Activated T-helper 2 cell treated with anti-CD3 and anti-CD28 coated beads, Interferon-gamma antibody, Interleukin-2, Interleukin-4, amounts not matched to agents 10 μg/mL and 5 μg/mL and 100 μg/mL, durations not matched to agents 14 hours and 24 hours and 36 hours (primary cell): ENCODE measurements at regions of chr1 and their contacts with region 1.

Region 1: DNA sequence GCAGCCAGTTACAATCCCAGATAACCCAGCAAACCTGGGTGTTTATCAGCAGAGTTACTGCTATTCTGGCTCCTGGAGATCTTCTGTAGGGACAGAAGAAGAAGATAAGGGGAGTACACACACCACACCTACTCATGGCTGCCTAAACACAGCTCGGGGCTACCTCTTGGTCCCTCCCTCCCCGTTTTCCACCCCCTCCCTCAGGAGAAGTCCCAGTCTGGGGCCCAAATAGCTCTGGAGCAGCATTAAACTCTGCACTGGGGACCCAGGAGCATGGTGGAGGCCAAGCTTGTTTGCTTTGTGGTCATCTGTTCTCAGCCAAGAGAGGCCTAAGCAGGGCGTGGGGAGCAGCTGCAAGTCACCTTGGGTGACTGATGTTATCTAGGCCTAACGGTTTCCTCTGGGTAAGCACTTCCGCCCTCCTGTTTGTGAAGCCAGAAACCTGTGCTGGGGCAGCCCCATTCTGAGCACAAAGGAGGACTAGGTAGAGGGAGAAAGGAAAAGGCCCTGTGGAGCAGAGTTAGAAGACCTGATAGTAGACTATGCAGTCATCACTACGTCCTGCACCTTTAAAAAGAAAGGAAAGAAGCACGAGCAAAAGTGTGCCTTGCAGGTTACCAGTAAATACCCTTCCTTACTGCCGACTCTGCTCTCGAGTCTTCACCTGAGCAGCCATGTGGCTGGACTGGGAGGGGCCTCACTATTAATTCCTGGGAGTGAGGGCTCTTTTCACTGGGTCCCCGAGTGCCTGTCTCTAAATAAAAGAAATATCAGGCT is 2.0 kb upstream of the RCSD1 start:
- DNase-seq: peak; percentile 84
- H3K4me3 Mint-ChIP-seq: peak overlapping the region; percentile 96
- H3K27ac Mint-ChIP-seq: peak overlapping the region; percentile 95
- H3K4me1 Mint-ChIP-seq: peaks cover 55% of the 10 kb centered on the region
- H3K27me3 Mint-ChIP-seq: no peaks in the 10 kb centered on the region

Region 2: GRCh38 chr1:167454894-167455785 is 172.9 kb before region 1 on chr1:
- intact Hi-C with region 1: loop called (anchors 5 kb)
- DNase-seq: peak; percentile 77
- H3K4me3 Mint-ChIP-seq: peak overlapping the region; percentile 77
- H3K27ac Mint-ChIP-seq: peak overlapping the region; percentile 51
- H3K4me1 Mint-ChIP-seq: peaks cover 50% of the 10 kb centered on the region
- H3K27me3 Mint-ChIP-seq: no peaks in the 10 kb centered on the region

Region 3: DNA sequence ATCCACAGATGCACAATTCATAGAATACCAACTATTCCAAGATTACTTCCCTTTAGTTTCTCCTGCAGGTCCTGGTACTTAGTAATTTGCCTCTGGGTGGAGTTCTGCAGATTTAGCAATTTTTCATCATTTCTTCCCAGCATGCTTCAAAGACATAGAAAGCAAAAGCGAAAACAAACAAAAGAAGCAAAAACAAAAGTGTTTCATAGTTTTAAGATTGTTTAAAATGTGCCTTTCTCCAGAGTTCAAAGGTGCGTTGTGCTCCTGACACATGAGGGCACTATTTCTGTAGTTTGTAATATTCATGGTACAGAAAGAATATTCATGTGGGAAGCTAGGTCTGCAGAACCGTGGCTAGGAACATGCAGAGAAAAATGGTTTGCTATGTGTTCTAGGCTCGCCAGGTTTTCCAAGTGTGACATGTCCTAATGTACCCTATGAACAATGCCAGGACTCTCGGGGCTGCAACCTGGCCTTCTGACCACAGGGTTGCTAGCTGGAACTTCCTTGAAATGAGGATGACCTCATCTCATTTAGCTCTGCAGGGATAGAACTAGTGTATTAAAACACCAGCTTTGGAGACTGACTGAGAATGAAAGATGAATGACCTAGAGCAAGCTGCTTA is 28.0 kb before region 1 on chr1:
- intact Hi-C with region 1: loop called (anchors 1 kb)
- DNase-seq: peak; percentile 38
- H3K4me3 Mint-ChIP-seq: peak overlapping the region; percentile 37
- H3K27ac Mint-ChIP-seq: peak overlapping the region; percentile 72
- H3K4me1 Mint-ChIP-seq: peaks cover 46% of the 10 kb centered on the region
- H3K27me3 Mint-ChIP-seq: no peaks in the 10 kb centered on the region

Region 4: DNA sequence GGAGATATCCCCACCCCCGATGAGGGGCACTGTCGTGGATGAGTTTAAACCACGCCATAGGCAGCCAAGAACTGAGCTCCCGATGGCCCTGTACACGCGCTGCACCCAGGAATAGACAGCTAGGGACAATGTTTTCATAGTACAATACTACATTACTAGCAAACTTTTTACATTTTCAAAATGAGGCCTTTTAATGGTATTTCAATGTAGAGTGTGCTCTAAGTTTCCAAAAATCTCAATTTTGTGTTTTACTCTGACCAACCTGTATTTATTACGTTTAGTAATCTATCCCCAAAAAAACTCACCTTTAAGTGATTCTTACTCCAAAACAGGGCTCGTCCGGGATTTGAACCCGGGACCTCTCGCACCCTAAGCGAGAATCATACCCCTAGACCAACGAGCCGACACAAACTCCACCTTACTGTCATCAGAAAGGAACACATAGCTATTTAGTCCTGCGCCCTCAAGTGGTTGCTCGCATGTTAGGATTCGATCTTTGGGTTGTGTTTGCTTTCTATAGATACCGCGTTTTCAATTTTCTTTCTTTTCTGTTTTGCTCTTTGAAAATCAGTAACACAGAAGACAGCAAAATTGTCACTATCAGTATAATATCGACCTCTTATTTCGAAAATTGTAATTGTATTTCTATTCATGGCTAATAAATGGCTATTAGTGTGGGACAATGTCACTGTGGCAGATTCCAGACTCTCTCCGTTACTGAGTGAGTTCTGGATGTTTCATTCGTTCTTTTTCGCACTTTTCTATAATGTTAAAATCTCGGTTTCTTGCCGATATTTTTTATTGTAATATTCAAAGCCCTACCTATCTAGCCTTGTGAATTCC is 87.3 kb after region 1 on chr1:
- intact Hi-C with region 1: loop called (anchors 1 kb)
- DNase-seq: peak; percentile 83
- H3K4me3 Mint-ChIP-seq: peak overlapping the region; percentile 87
- H3K27ac Mint-ChIP-seq: peak overlapping the region; percentile 87
- H3K4me1 Mint-ChIP-seq: peaks cover 29% of the 10 kb centered on the region
- H3K27me3 Mint-ChIP-seq: peaks cover 4% of the 10 kb centered on the region